ENCODE measurements at regions of chr17 and their contacts with region 1.

Region 1: GRCh38 chr17:7931709-7932482 is at the starts of genes CNTROB and TRAPPC1:
- DNase-seq: peak; percentile 99 to 100
- ATAC-seq: peak; percentile 97 to 98
- H3K4me3 ChIP-seq: peak within 1 kb of the TSS; percentile 85 to 97 (median 94)
- H3K27ac ChIP-seq: peak within 1 kb of the TSS; percentile 83 to 90 (median 87)
- H3K4me1 ChIP-seq: peaks cover 17 to 19% of the 10 kb centered on the region in 2 donors
- H3K27me3 ChIP-seq: no peaks in the 10 kb centered on the region
- CTCF ChIP-seq: no peak
- POLR2A ChIP-seq: peak; percentile 78
- total RNA-seq, gene CNTROB: 3.6 to 14.3 (median 7.2) TPM
- total RNA-seq, gene TRAPPC1: 19.4 to 41.7 (median 30.0) TPM

Region 2: GRCh38 chr17:7915611-7916382 is 16.1 kb before region 1 on chr17 and contains the start of gene RNF227:
- in situ Hi-C with region 1: no loop called
- intact Hi-C with region 1: loop called (anchors 1 kb)
- DNase-seq: peak; percentile 66 to 78
- ATAC-seq: peak; percentile 91 to 93
- H3K4me3 ChIP-seq: peak within 1 kb of the TSS; percentile 79 to 81 (median 80)
- H3K27ac ChIP-seq: peak within 1 kb of the TSS; percentile 85 to 92 (median 90)
- H3K4me1 ChIP-seq: peaks cover 17 to 21% of the 10 kb centered on the region in 2 donors
- H3K27me3 ChIP-seq: no peaks in the 10 kb centered on the region
- CTCF ChIP-seq: no peak
- POLR2A ChIP-seq: peak; percentile 56 to 59
- total RNA-seq, gene RNF227: 0.51 to 1.2 (median 0.62) TPM in 3 of 4 donors, not detected in the other

Measured in gastrocnemius medialis (tissue), 4 donors.